ENCODE measurements at regions of chr12 and their contacts with region 1.

Region 1: GRCh38 chr12:103965590-103966504 is at the start of gene TDG:
- DNase-seq: peak; percentile 93 to 96
- H3K4me3 ChIP-seq: peak within 1 kb of the TSS; percentile 80 to 91 (median 88)
- H3K27ac ChIP-seq: peak within 1 kb of the TSS; percentile 94
- H3K4me1 ChIP-seq: peaks cover 0 to 9% (median 2%) of the 10 kb centered on the region in 4 experiments; a peak in 4 of 7 replicates
- H3K27me3 ChIP-seq: no peaks in the 10 kb centered on the region
- CTCF ChIP-seq: no peak
- EP300 ChIP-seq: no peak
- POLR2A ChIP-seq: peak; percentile 94 to 98
- RAD21 ChIP-seq: no peak
- total RNA-seq, gene TDG: 47.8 and 49.0 TPM in 2 replicates

Region 2: DNA sequence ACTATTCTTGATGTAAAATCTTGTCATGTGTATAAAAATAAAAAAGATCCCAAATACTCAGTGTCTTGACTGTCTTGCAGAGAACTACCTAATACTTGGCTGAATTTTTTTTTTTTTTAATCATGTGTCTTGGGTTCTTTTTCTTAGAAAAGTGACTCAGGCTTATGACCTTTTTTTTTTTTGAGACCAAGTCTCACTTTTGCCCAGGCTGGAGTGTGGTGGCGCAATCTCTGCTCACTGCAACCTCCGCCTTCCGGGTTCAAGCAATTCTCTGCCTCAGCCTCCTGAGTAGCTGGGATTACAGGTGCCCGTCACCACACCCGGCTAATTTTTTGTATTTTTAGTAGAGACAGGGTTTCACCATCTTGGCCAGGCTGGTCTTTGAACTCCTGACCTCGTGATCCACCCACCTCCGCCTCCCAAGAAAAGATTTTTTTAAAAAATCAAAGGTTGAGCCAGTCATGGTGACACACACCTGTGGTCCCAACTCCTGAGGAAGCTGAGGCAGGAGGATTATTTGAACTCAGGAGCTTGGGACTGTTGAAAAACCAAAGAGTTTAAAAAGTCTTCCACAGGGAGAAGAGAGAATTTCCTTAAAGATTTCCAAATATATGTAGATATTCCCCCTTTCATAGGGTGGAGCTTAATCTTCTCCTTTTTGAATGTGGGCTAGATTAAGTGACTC is 17.8 kb before region 1 on chr12:
- CTCF ChIA-PET with region 1: interaction called, 4 read pairs
- POLR2A ChIA-PET with region 1: interaction called, 141 read pairs
- DNase-seq: no peak
- H3K4me3 ChIP-seq: no peak overlapping the region
- H3K27ac ChIP-seq: no peak overlapping the region
- H3K4me1 ChIP-seq: no peaks in the 10 kb centered on the region
- H3K27me3 ChIP-seq: no peaks in the 10 kb centered on the region
- CTCF ChIP-seq: no peak
- EP300 ChIP-seq: no peak
- POLR2A ChIP-seq: no peak
- RAD21 ChIP-seq: no peak

Region 3: DNA sequence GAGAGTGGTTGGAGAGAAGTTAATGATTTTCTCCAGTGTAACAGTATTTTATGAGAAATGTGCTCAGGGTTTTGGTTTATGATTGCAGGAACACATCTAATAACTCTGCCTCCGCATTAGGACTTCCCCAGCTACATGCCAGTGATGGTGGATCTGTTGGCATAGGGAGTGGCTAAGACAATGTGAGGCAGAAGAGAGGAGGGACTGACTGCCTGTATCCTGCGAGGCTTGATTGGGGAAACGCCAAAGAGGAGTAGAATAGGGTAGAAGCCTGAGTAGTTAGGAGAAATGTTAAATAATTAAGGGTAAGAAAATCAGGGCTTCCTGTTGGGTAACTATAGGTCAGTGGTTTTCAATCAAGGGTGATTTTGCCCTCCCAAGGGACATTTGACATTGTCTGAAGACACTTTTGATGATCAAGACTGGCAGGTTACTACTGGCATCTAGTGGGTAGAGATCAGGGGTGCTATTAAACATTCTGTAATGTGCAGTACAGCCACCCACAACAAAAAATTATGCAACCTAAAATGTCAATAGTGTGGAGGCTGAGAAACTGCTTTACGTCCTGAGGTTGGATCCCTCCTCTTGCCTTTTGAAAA is 12.6 kb after region 1 on chr12:
- CTCF ChIA-PET with region 1: interaction called, 3 read pairs
- POLR2A ChIA-PET with region 1: interaction called, 19 read pairs
- DNase-seq: no peak
- H3K4me3 ChIP-seq: no peak overlapping the region
- H3K27ac ChIP-seq: no peak overlapping the region
- H3K4me1 ChIP-seq: no peaks in the 10 kb centered on the region
- H3K27me3 ChIP-seq: no peaks in the 10 kb centered on the region
- CTCF ChIP-seq: no peak
- EP300 ChIP-seq: no peak
- POLR2A ChIP-seq: peak in 1 of 2 experiments; percentile 16; a peak in 1 of 3 replicates
- RAD21 ChIP-seq: no peak

Measured in H1 (cell line).